ENCODE measurements at regions of chr1 and their contacts with region 1.

Region 1: GRCh38 chr1:67430352-67431155 is at the start of gene SERBP1:
- DNase-seq: peak; percentile 91
- ATAC-seq: peak; percentile 86
- H3K4me3 Mint-ChIP-seq: peak within 1 kb of the TSS; percentile 98
- H3K27ac Mint-ChIP-seq: peak within 1 kb of the TSS; percentile 99
- H3K4me1 Mint-ChIP-seq: peaks cover 59% of the 10 kb centered on the region
- H3K27me3 Mint-ChIP-seq: no peaks in the 10 kb centered on the region
- CTCF ChIP-seq: no peak
- total RNA-seq, gene SERBP1: 222 and 232 TPM in 2 replicates

Region 2: GRCh38 chr1:66924756-66925557 is 505.6 kb before region 1 on chr1 and contains the starts of genes DNAI4 and MIER1:
- CTCF ChIA-PET with region 1: no interaction called
- POLR2A ChIA-PET with region 1: interaction called, 16 read pairs
- intact Hi-C with region 1: loop called (anchors 1 kb)
- DNase-seq: peak; percentile 95
- ATAC-seq: peak; percentile 94
- H3K4me3 Mint-ChIP-seq: peak within 1 kb of the TSS; percentile 93
- H3K27ac Mint-ChIP-seq: peak within 1 kb of the TSS; percentile 95
- H3K4me1 Mint-ChIP-seq: peaks cover 30% of the 10 kb centered on the region
- H3K27me3 Mint-ChIP-seq: no peaks in the 10 kb centered on the region
- CTCF ChIP-seq: no peak
- total RNA-seq, gene DNAI4: 0.75 and 3.4 TPM in 2 replicates
- total RNA-seq, gene MIER1: 39.1 and 39.2 TPM in 2 replicates

Region 3: GRCh38 chr1:67053785-67054772 is 376.5 kb before region 1 on chr1 and contains the start of gene SLC35D1:
- CTCF ChIA-PET with region 1: no interaction called
- POLR2A ChIA-PET with region 1: interaction called, 5 read pairs
- intact Hi-C with region 1: loop called (anchors 1 kb)
- DNase-seq: peak; percentile 82
- ATAC-seq: peak; percentile 85
- H3K4me3 Mint-ChIP-seq: peak within 1 kb of the TSS; percentile 92
- H3K27ac Mint-ChIP-seq: peak within 1 kb of the TSS; percentile 92
- H3K4me1 Mint-ChIP-seq: peaks cover 21% of the 10 kb centered on the region
- H3K27me3 Mint-ChIP-seq: no peaks in the 10 kb centered on the region
- CTCF ChIP-seq: no peak
- total RNA-seq, gene SLC35D1: 10.1 and 11.1 TPM in 2 replicates

Region 4: GRCh38 chr1:67339623-67340343 is 90.8 kb before region 1 on chr1:
- CTCF ChIA-PET with region 1: no interaction called
- POLR2A ChIA-PET with region 1: interaction called, 39 read pairs
- intact Hi-C with region 1: loop called (anchors 1 kb)
- DNase-seq: no peak
- ATAC-seq: peak; percentile 51
- H3K4me3 Mint-ChIP-seq: peak overlapping the region; percentile 62
- H3K27ac Mint-ChIP-seq: peak overlapping the region; percentile 77
- H3K4me1 Mint-ChIP-seq: peaks cover 74% of the 10 kb centered on the region
- H3K27me3 Mint-ChIP-seq: no peaks in the 10 kb centered on the region
- CTCF ChIP-seq: no peak

Region 5: GRCh38 chr1:67500413-67500959 is 69.9 kb after region 1 on chr1:
- CTCF ChIA-PET with region 1: interaction called, 9 read pairs
- POLR2A ChIA-PET with region 1: interaction called, 3 read pairs
- intact Hi-C with region 1: loop called (anchors 1 kb)
- DNase-seq: peak; percentile 70
- ATAC-seq: peak; percentile 98
- H3K4me3 Mint-ChIP-seq: no peak overlapping the region
- H3K27ac Mint-ChIP-seq: no peak overlapping the region
- H3K4me1 Mint-ChIP-seq: peaks cover 4% of the 10 kb centered on the region
- H3K27me3 Mint-ChIP-seq: peaks cover 15% of the 10 kb centered on the region
- CTCF ChIP-seq: peak; percentile 80